PC-3 (cell line): ENCODE measurements at regions of chr10 and their contacts with region 1.

Region 1: DNA sequence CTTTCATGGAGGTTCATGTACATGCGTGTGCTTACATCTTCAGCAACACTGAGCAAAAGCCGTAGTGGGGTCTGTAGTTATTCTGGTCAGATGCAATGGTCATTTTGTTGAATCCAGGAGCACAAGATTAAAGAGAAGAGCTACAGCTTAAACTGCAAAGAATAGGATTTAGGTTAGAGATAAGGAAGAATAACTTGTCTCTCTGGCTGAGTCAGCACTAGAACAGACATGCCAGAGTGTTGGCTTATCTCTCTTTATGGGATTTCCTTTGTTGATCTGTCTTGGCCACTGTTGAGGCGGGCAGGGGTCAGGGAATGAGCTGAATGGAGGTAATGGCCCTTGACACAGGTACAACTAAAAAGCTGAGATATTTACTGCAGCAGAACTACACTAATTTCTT is 473.5 kb downstream of the CCSER2 start:
- DNase-seq: no peak
- ATAC-seq: no peak
- H3K4me3 ChIP-seq: no peak overlapping the region
- H3K27ac ChIP-seq: no peak overlapping the region
- H3K4me1 ChIP-seq: no peaks in the 10 kb centered on the region
- H3K27me3 ChIP-seq: no peaks in the 10 kb centered on the region
- CTCF ChIP-seq: no peak

Region 2: DNA sequence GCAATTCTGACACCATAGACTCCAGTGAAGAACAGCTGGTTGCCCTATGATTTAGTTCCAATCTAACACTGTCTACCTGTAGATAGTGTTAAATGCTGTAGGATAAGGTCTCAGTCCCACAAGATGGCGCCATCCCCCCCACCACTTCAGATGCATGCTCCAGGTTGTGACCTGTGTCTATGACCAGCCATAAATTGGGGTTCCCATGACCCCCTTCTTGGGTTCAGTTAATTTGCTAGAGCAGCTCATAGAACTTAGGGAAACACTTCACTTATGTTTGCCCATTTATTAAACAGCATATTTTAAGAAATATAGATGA is 460.4 kb before region 1 on chr10:
- CTCF ChIA-PET with region 1: interaction called, 11 read pairs
- POLR2A ChIA-PET with region 1: no interaction called
- intact Hi-C with region 1: no loop called
- DNase-seq: no peak
- ATAC-seq: no peak
- H3K4me3 ChIP-seq: no peak overlapping the region
- H3K27ac ChIP-seq: no peak overlapping the region
- H3K4me1 ChIP-seq: peaks cover 8% of the 10 kb centered on the region; the same call in 1 of the 2 replicates
- H3K27me3 ChIP-seq: no peaks in the 10 kb centered on the region
- CTCF ChIP-seq: peak; percentile 30

Region 3: GRCh38 chr10:84845624-84846261 is 43.8 kb after region 1 on chr10:
- CTCF ChIA-PET with region 1: interaction called, 10 read pairs
- POLR2A ChIA-PET with region 1: no interaction called
- intact Hi-C with region 1: no loop called
- DNase-seq: peak; percentile 22
- ATAC-seq: no peak
- H3K4me3 ChIP-seq: no peak overlapping the region
- H3K27ac ChIP-seq: no peak overlapping the region
- H3K4me1 ChIP-seq: no peaks in the 10 kb centered on the region
- H3K27me3 ChIP-seq: no peaks in the 10 kb centered on the region
- CTCF ChIP-seq: peak; percentile 49